ENCODE measurements at regions of chr20 and their contacts with region 1.

Region 1: DNA sequence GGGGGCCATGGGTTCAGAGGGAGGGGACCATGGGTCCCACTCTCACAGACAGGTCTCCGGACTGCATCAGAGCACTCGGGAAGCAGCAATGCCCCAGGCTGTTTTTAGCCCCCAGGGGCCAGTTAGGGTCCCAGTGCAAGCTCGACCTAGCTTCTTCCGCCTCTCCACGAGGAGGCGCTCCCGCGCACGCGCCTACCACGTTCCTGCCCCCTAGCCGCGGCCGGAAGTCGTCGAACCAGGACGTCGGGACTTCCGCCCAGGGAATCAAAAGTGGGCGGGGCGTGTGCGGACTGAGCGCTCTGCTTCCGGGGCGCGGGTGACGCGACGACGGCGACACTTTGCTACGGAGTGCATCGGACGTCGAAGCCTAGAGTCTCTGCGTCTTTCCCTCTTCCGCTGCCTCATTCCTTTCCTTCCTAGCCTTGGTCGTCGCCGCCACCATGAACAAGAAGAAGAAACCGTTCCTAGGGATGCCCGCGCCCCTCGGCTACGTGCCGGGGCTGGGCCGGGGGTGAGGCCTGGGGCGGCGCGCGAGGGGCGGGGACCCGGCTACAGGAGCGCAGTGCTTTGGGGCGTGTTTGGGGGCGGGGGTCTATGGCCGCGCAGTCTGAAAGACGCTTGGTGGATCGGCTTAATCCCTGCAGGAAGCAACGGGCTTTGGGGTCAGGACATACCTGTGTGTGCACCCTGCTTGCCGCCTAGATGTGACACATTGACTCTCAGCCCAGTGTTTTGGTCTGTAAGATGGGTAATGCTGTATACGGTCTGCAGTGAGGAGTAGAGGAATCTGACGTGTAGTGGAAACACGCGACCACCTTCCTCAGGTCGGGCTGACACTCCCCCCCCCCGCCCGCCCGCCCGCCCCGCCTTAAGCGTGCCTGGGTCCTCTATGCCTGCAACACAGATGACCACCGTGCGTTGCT is at the start of gene PRPF6:
- DNase-seq: peak; percentile 89 to 98 (median 94)
- ATAC-seq: peak; percentile 58
- H3K4me3 ChIP-seq: peak within 1 kb of the TSS; percentile 69
- H3K4me3 Mint-ChIP-seq: peak within 1 kb of the TSS; percentile 90
- H3K27ac ChIP-seq: peak within 1 kb of the TSS; percentile 85 to 87
- H3K27ac Mint-ChIP-seq: peak within 1 kb of the TSS; percentile 98
- H3K4me1 ChIP-seq: peaks cover 60% of the 10 kb centered on the region
- H3K4me1 Mint-ChIP-seq: peaks cover 67% of the 10 kb centered on the region
- H3K27me3 ChIP-seq: no peaks in the 10 kb centered on the region
- H3K27me3 Mint-ChIP-seq: no peaks in the 10 kb centered on the region
- CTCF ChIP-seq: peak; percentile 93
- total RNA-seq, gene PRPF6: 50.6 to 51.3 TPM

Region 2: GRCh38 chr20:63434599-63435378 is 546.3 kb before region 1 on chr20:
- CTCF ChIA-PET with region 1: no interaction called
- POLR2A ChIA-PET with region 1: no interaction called
- intact Hi-C with region 1: loop called in 1 of 2 experiments (anchors 5 kb)
- DNase-seq: peak; percentile 59 to 91 (median 72)
- ATAC-seq: peak; percentile 77
- H3K4me3 ChIP-seq: no peak overlapping the region
- H3K4me3 Mint-ChIP-seq: peak overlapping the region; percentile 20
- H3K27ac ChIP-seq: peak overlapping the region in 1 of 2 donors; percentile 11
- H3K27ac Mint-ChIP-seq: peak overlapping the region; percentile 84
- H3K4me1 ChIP-seq: peaks cover 11% of the 10 kb centered on the region
- H3K4me1 Mint-ChIP-seq: peaks cover 10% of the 10 kb centered on the region
- H3K27me3 ChIP-seq: no peaks in the 10 kb centered on the region
- H3K27me3 Mint-ChIP-seq: peaks cover 6% of the 10 kb centered on the region
- CTCF ChIP-seq: peak; percentile 84

Region 3: DNA sequence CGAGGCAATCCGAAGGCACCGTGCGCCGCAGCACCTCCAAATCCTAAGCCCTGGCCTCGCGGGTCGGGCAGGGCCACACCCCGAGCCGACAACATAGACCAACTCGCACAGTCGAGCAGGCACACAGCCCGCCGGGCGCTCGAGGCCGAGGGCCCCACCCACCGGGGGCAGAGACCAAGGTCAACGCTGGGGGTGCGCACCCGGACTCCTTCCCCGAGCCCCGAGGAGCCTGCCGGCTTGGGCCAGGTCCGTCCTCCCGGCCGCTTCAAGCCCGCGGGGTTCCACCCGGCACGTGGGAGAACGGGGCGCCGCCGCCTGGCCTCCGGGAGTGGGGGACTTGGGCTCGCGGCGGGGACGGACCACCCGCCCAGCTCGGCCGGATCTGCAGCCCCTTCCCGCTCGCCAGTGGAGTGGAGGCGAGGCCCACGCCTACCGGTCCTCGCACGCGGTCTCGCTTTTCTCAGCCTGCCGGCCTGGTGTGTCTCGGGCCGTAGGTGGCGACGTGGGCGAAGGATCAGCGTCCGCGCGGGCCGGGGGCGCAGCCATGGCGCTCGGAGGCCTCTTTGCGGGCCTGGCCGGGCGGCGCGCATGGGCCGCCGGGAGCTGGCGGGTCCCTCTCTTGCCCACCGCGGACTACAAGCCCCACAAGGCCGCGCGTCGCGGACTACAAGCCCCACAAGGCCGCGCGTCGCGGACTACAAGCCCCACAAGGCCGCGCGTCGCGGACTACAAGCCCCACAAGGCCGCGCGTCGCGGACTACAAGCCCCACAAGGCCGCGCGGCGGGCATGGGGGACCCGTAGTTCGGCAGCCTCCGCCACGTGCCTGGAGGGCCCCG is 25.0 kb before region 1 on chr20 and contains the start of gene UCKL1:
- CTCF ChIA-PET with region 1: interaction called, 5 read pairs
- POLR2A ChIA-PET with region 1: interaction called, 27 read pairs
- intact Hi-C with region 1: loop called in 1 of 2 experiments (anchors 1 kb)
- DNase-seq: peak; percentile 81 to 95 (median 88)
- ATAC-seq: peak; percentile 79
- H3K4me3 ChIP-seq: peak within 1 kb of the TSS; percentile 77
- H3K4me3 Mint-ChIP-seq: peak within 1 kb of the TSS; percentile 87
- H3K27ac ChIP-seq: peak within 1 kb of the TSS; percentile 45 to 69
- H3K27ac Mint-ChIP-seq: peak within 1 kb of the TSS; percentile 82
- H3K4me1 ChIP-seq: peaks cover 59% of the 10 kb centered on the region
- H3K4me1 Mint-ChIP-seq: peaks cover 37% of the 10 kb centered on the region
- H3K27me3 ChIP-seq: no peaks in the 10 kb centered on the region
- H3K27me3 Mint-ChIP-seq: no peaks in the 10 kb centered on the region
- CTCF ChIP-seq: no peak
- total RNA-seq, gene UCKL1: 41.3 to 46.1 TPM

Region 4: DNA sequence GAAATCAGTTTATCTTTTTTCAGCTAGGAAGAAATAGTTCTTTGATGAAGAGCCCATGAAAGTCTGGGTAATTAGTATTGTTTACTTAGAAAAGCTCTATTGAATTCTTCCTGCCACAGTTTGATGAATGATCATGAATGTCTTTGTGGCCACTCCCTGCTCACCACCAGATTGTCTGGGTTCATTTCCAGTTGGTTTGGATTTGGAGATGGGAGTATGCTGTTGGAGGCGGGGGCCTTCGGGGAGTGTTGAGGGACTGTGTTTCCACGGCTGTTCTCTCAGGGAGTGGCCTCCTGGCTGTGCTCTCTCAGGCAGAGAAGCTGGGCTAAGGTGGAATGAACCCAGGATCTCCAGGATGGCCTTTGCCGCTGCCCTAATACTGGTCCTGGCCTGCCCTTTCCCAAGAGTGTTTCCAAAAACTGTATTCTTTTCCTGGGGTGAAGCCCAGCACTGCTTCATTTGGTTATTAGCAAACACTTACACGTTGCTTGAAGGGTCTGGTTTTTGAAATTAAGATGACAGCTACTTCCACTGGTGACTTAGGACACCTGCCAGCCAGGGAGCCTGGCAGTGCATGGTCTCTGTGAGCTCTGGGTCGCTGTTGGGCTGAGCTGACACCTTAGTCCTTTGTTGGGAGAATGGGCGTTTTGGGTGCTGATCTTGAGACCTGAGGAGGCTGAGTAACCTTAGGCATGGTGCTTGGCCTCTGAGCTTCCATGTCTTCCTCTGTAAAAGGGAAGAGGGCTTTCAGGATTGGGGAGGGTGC is 23.1 kb after region 1 on chr20:
- CTCF ChIA-PET with region 1: no interaction called
- POLR2A ChIA-PET with region 1: no interaction called
- intact Hi-C with region 1: loop called in 1 of 2 experiments (anchors 2 kb)
- DNase-seq: no peak
- ATAC-seq: no peak
- H3K4me3 ChIP-seq: no peak overlapping the region
- H3K4me3 Mint-ChIP-seq: no peak overlapping the region
- H3K27ac ChIP-seq: no peak overlapping the region
- H3K27ac Mint-ChIP-seq: no peak overlapping the region
- H3K4me1 ChIP-seq: no peaks in the 10 kb centered on the region
- H3K4me1 Mint-ChIP-seq: peaks cover 18% of the 10 kb centered on the region
- H3K27me3 ChIP-seq: no peaks in the 10 kb centered on the region
- H3K27me3 Mint-ChIP-seq: no peaks in the 10 kb centered on the region
- CTCF ChIP-seq: no peak

Measured in CD4-positive, alpha-beta T cell (primary cell).